Left ventricle myocardium superior (tissue), 1 donor: ENCODE measurements at regions of chr5 and their contacts with region 1.

Region 1: DNA sequence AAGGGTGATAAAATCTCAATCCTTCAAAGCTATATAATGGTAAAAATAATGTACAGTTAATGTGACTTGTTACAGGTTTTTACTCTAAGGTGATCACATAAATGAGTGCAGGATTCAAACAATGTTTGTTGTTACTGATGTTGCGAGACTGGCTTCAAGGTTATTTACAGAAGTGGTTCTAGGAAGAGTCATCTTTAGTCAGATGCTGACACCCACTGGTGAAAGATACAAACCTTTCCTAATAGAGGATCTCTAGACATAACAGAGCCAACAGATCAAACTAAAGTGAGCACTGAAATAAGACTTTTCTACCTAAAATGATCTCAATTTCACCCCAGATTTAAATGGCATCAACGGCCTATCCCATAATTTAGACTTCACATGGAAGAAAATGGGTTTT is 20.2 kb downstream of the ARSB start:
- DNase-seq: no peak
- ATAC-seq: peak; percentile 74

Region 2: GRCh38 chr5:78467752-78468357 is 497.0 kb before region 1 on chr5:
- intact Hi-C with region 1: loop called (anchors 5 kb)
- DNase-seq: no peak
- ATAC-seq: peak; percentile 65

Region 3: GRCh38 chr5:78537821-78538220 is 427.1 kb before region 1 on chr5:
- intact Hi-C with region 1: loop called (anchors 5 kb)
- DNase-seq: no peak
- ATAC-seq: peak; percentile 66

Region 4: GRCh38 chr5:78661691-78662090 is 303.2 kb before region 1 on chr5:
- intact Hi-C with region 1: no loop called
- DNase-seq: no peak
- ATAC-seq: no peak

Region 5: DNA sequence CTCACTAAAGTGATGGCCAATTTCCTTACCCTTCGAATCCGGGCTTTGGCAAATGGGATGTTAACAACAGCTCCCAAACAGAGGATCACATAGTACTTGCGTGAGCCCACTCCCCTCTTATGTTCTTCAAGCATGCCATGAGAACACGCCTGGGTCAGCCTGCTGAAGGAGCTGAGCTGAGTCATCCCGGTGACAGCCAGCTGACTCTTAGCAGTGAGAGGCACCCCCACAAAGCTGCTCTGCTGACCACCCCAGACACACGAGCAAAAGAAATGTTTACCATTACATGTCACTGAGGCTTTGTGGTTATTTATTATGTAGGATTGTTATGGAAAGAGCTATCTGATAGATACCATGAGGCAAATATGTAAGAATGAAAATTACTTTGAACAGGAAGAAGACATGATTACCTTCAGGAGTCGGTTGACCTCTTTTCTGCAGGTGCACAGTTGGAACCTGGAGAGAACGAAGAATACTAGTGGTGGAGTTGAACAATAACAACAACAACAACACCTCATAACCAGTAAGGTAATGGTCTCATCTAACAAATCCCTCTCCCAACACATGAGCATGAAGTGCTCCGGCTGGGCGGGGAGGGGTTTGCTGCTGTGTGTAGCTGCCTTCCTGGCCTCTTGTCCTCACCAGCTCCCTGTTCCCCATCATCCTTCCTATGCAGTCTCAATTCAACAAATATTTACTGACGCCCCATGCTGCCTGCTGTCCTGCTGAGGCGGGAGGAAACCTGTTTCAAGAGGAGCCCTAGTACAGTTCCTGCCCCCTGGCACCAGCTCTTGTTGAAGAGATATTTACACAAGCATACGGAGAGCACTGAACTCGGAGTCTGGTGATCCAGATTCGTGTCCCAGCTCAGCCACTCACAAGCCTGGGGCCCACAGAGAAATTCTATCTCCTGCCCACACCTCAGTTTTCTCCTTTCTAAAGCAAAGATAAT is 246.9 kb before region 1 on chr5:
- intact Hi-C with region 1: no loop called
- DNase-seq: no peak
- ATAC-seq: no peak

Region 6: GRCh38 chr5:78855026-78855425 is 109.9 kb before region 1 on chr5:
- intact Hi-C with region 1: no loop called
- DNase-seq: no peak
- ATAC-seq: no peak